Naive thymus-derived CD4-positive, alpha-beta T cell (primary cell): ENCODE measurements at regions of chr1 and their contacts with region 1.

Region 1: DNA sequence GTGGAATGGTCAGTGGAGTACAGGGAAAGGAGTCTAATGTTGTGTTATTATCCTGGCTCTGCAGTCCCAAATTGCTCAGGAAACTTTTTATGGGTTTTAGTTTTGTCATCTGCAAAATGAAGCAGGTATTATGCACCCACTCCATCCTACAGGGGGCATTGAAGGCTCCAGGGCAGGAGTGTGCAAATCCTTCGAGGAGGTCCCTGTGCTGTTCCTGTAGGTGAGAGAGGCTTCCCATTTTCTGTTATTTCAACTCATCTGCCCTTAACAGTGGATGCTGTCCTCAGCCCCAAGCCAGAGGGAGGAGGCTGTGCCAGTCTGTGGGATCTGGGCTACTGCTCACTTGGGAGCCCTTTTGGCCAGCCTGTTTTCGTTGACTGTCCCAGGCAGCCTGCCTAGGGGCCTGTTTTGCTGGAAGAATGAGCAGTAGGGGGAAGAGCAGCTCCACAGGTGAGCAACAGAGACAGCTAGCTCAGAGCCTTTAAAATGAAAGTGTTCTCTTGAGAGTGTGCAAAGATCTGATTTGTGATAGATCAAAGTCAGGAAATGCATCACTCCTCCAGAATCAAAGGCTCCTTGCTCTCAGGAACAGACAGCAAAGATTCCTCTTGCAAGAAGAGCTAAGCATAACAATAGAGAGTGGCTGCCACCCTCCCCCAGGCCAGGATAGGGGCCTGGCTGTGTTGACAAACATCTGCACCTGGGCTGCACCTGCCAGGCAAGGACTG is 317.6 kb upstream of the PROX1 start:
- DNase-seq: peak in 8 of 9 donors; percentile 9 to 89 (median 80)
- ATAC-seq: peak; percentile 93
- H3K4me3 ChIP-seq: no peak overlapping the region
- H3K4me3 Mint-ChIP-seq: peak overlapping the region in 8 of 10 donors; percentile 7 to 67 (median 52)
- H3K27ac ChIP-seq: peak overlapping the region; percentile 48
- H3K27ac Mint-ChIP-seq: peak overlapping the region in 8 of 9 donors; percentile 41 to 97 (median 90)
- H3K4me1 ChIP-seq: peaks cover 0 to 15% of the 10 kb centered on the region in 2 donors
- H3K4me1 Mint-ChIP-seq: peaks cover 7 to 39% (median 29%) of the 10 kb centered on the region in 7 donors
- H3K27me3 ChIP-seq: no peaks in the 10 kb centered on the region
- H3K27me3 Mint-ChIP-seq: no peaks in the 10 kb centered on the region

Region 2: DNA sequence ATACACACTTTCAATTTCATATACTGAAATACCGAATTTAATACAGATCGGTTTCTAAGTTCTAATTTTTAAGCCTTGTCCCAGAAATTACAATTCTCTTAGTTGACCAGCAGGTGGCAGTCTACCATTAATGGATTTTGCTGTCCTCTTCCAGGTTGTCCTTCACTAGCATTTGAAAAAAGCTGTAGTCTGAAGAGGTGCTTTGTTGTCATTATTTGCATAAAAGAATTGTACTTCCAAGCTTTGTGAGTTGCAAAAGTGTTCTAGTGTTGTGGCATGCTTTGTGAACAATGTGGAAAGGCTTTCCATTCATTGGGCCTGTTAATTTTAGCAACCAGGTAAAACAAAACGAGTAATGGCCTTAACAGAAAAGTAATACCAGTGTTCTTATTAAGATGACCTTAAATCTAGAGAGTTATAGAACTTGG is 425.4 kb before region 1 on chr1:
- CTCF ChIA-PET with region 1: no interaction called
- POLR2A ChIA-PET with region 1: no interaction called
- intact Hi-C with region 1: loop called in 1 of 2 experiments (anchors 2 kb)
- DNase-seq: peak in 5 of 9 donors; percentile 13 to 44 (median 34)
- ATAC-seq: peak; percentile 40
- H3K4me3 ChIP-seq: no peak overlapping the region
- H3K4me3 Mint-ChIP-seq: no peak overlapping the region
- H3K27ac ChIP-seq: no peak overlapping the region
- H3K27ac Mint-ChIP-seq: no peak overlapping the region
- H3K4me1 ChIP-seq: no peaks in the 10 kb centered on the region
- H3K4me1 Mint-ChIP-seq: no peaks in the 10 kb centered on the region
- H3K27me3 ChIP-seq: no peaks in the 10 kb centered on the region
- H3K27me3 Mint-ChIP-seq: no peaks in the 10 kb centered on the region

Region 3: DNA sequence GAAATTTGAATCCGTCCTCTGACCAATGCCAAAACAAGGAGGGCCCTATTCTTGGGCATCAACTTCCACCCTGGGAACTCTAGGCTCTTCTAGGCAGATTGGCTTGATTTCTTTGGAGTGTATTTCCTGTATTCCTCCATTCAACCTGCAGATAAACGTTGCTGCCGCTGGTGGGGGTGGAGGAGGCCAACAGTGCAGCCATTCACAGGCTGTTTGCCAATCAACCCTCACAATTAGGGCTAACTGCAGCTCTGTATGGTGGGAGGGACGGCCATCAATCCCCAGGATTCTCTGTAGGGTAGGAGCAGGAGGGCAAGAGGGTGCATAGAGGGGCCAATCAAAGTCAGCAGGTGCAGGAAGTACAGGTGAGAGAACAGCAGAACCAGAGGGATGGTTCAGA is 44.5 kb after region 1 on chr1:
- CTCF ChIA-PET with region 1: no interaction called
- POLR2A ChIA-PET with region 1: no interaction called
- intact Hi-C with region 1: loop called in 1 of 2 experiments (anchors 1 kb)
- DNase-seq: no peak
- ATAC-seq: no peak
- H3K4me3 ChIP-seq: no peak overlapping the region
- H3K4me3 Mint-ChIP-seq: no peak overlapping the region
- H3K27ac ChIP-seq: no peak overlapping the region
- H3K27ac Mint-ChIP-seq: no peak overlapping the region
- H3K4me1 ChIP-seq: peaks cover 0 to 9% of the 10 kb centered on the region in 2 donors
- H3K4me1 Mint-ChIP-seq: peaks cover 2 to 36% (median 28%) of the 10 kb centered on the region in 7 donors
- H3K27me3 ChIP-seq: no peaks in the 10 kb centered on the region
- H3K27me3 Mint-ChIP-seq: no peaks in the 10 kb centered on the region

Region 4: GRCh38 chr1:213783893-213784292 is 113.8 kb after region 1 on chr1:
- CTCF ChIA-PET with region 1: interaction called, 5 read pairs
- POLR2A ChIA-PET with region 1: interaction called, 3 read pairs
- intact Hi-C with region 1: loop called in 1 of 2 experiments (anchors 1 kb)
- DNase-seq: peak in 7 of 9 donors; percentile 24 to 63 (median 52)
- ATAC-seq: peak; percentile 70
- H3K4me3 ChIP-seq: no peak overlapping the region
- H3K4me3 Mint-ChIP-seq: peak overlapping the region in 9 of 10 donors; percentile 39 to 81 (median 70)
- H3K27ac ChIP-seq: no peak overlapping the region
- H3K27ac Mint-ChIP-seq: peak overlapping the region in 6 of 9 donors; percentile 4 to 84 (median 48)
- H3K4me1 ChIP-seq: peaks cover 0 to 20% of the 10 kb centered on the region in 2 donors
- H3K4me1 Mint-ChIP-seq: peaks cover 0 to 42% (median 39%) of the 10 kb centered on the region in 7 donors
- H3K27me3 ChIP-seq: no peaks in the 10 kb centered on the region
- H3K27me3 Mint-ChIP-seq: peaks cover 6 to 17% (median 8%) of the 10 kb centered on the region in 5 donors

Region 5: DNA sequence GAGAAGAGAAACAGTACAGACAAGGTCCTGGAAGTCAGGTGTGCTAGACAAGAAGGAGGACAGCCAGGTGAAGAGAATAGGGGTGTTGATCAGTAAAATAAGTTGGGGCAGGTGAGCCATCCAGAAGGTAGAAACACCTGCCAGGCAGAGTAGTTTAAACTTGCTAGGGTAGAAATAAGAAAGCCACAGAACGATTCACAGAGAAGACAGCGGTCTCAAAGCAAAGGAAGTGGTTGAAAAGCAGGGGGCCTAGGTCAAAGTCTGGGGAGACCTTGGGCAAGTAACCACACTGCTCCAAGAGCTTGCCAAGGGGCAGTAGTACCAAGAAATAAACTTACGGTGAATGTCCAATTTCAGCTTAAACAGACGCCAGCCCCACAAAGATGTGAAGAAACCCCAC is 201.1 kb after region 1 on chr1:
- CTCF ChIA-PET with region 1: interaction called, 5 read pairs
- POLR2A ChIA-PET with region 1: no interaction called
- intact Hi-C with region 1: loop called in 1 of 2 experiments (anchors 5 kb)
- DNase-seq: peak in 6 of 9 donors; percentile 14 to 44 (median 30)
- ATAC-seq: peak; percentile 22
- H3K4me3 ChIP-seq: no peak overlapping the region
- H3K4me3 Mint-ChIP-seq: peak overlapping the region in 8 of 10 donors; percentile 12 to 72 (median 46)
- H3K27ac ChIP-seq: no peak overlapping the region
- H3K27ac Mint-ChIP-seq: peak overlapping the region in 8 of 9 donors; percentile 4 to 79 (median 32)
- H3K4me1 ChIP-seq: peaks cover 0 to 32% of the 10 kb centered on the region in 2 donors
- H3K4me1 Mint-ChIP-seq: peaks cover 0 to 60% (median 35%) of the 10 kb centered on the region in 7 donors
- H3K27me3 ChIP-seq: no peaks in the 10 kb centered on the region
- H3K27me3 Mint-ChIP-seq: no peaks in the 10 kb centered on the region

Region 6: GRCh38 chr1:214123061-214123784 is 453.1 kb after region 1 on chr1:
- CTCF ChIA-PET with region 1: interaction called, 28 read pairs
- POLR2A ChIA-PET with region 1: interaction called, 4 read pairs
- intact Hi-C with region 1: loop called in 1 of 2 experiments (anchors 1 kb)
- DNase-seq: peak in 7 of 9 donors; percentile 39 to 62 (median 53)
- ATAC-seq: peak; percentile 61
- H3K4me3 ChIP-seq: no peak overlapping the region
- H3K4me3 Mint-ChIP-seq: peak overlapping the region in 4 of 10 donors; percentile 24 to 71 (median 48)
- H3K27ac ChIP-seq: no peak overlapping the region
- H3K27ac Mint-ChIP-seq: peak overlapping the region in 3 of 9 donors; percentile 6 to 59 (median 28)
- H3K4me1 ChIP-seq: peaks cover 0 to 3% of the 10 kb centered on the region in 2 donors
- H3K4me1 Mint-ChIP-seq: peaks cover 4 to 29% (median 11%) of the 10 kb centered on the region in 7 donors
- H3K27me3 ChIP-seq: no peaks in the 10 kb centered on the region
- H3K27me3 Mint-ChIP-seq: peaks cover 0 to 19% (median 0%) of the 10 kb centered on the region in 5 donors